Activated naive CD4-positive, alpha-beta T cell treated with anti-CD3 and anti-CD28 coated beads for 36 hours (primary cell): ENCODE measurements at regions of chr2 and their contacts with region 1.

Region 1: GRCh38 chr2:100113990-100114433 is 28.4 kb downstream of the AFF3 start:
- DNase-seq: no peak
- H3K4me3 Mint-ChIP-seq: no peak overlapping the region
- H3K27ac Mint-ChIP-seq: peak overlapping the region; percentile 1
- H3K4me1 Mint-ChIP-seq: peaks cover 24% of the 10 kb centered on the region
- H3K27me3 Mint-ChIP-seq: no peaks in the 10 kb centered on the region

Region 2: GRCh38 chr2:100136310-100136709 is 22.3 kb after region 1 on chr2:
- CTCF ChIA-PET with region 1: no interaction called
- intact Hi-C with region 1: loop called (anchors 2 kb)
- DNase-seq: no peak
- H3K4me3 Mint-ChIP-seq: no peak overlapping the region
- H3K27ac Mint-ChIP-seq: no peak overlapping the region
- H3K4me1 Mint-ChIP-seq: peaks cover 40% of the 10 kb centered on the region
- H3K27me3 Mint-ChIP-seq: peaks cover 2% of the 10 kb centered on the region

Region 3: DNA sequence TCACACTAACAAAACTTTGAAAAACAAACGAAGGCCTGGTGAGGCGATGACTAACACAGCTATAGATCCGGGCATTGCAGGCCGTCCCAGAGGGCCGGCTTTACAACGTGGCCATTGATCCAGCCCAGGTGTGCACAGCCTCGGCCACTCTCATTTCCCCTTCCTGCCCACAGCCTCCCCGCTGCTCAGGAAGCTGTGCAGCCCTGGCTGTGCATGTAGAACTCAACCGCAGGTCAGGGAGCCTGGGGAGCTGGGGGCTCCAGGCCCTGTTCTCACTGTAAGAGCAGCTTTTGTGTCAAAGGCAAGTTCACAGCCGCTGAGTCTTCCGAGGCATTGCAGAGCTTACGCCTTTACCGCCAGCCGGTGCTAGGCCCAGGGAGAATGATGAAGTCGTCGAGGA is 121.1 kb after region 1 on chr2:
- CTCF ChIA-PET with region 1: no interaction called
- intact Hi-C with region 1: loop called (anchors 5 kb)
- DNase-seq: peak; percentile 20
- H3K4me3 Mint-ChIP-seq: no peak overlapping the region
- H3K27ac Mint-ChIP-seq: no peak overlapping the region
- H3K4me1 Mint-ChIP-seq: peaks cover 18% of the 10 kb centered on the region
- H3K27me3 Mint-ChIP-seq: no peaks in the 10 kb centered on the region